Breast epithelium (tissue), 4 donors: ENCODE measurements at regions of chr11 and their contacts with region 1.

Region 1: GRCh38 chr11:74154621-74155281 is 16.1 kb downstream of the C2CD3 start:
- DNase-seq: no peak
- H3K4me3 ChIP-seq: no peak overlapping the region
- H3K27ac ChIP-seq: no peak overlapping the region
- H3K4me1 ChIP-seq: no peaks in the 10 kb centered on the region
- H3K27me3 ChIP-seq: no peaks in the 10 kb centered on the region
- CTCF ChIP-seq: no peak
- POLR2A ChIP-seq: no peak

Region 2: GRCh38 chr11:74390697-74391096 is 235.9 kb after region 1 on chr11:
- intact Hi-C with region 1: loop called (anchors 5 kb)
- DNase-seq: no peak
- H3K4me3 ChIP-seq: no peak overlapping the region
- H3K27ac ChIP-seq: no peak overlapping the region
- H3K4me1 ChIP-seq: no peaks in the 10 kb centered on the region
- H3K27me3 ChIP-seq: no peaks in the 10 kb centered on the region
- CTCF ChIP-seq: no peak
- POLR2A ChIP-seq: no peak